AG04450 (cell line): ENCODE measurements at regions of chr6 and their contacts with region 1.

Region 1: DNA sequence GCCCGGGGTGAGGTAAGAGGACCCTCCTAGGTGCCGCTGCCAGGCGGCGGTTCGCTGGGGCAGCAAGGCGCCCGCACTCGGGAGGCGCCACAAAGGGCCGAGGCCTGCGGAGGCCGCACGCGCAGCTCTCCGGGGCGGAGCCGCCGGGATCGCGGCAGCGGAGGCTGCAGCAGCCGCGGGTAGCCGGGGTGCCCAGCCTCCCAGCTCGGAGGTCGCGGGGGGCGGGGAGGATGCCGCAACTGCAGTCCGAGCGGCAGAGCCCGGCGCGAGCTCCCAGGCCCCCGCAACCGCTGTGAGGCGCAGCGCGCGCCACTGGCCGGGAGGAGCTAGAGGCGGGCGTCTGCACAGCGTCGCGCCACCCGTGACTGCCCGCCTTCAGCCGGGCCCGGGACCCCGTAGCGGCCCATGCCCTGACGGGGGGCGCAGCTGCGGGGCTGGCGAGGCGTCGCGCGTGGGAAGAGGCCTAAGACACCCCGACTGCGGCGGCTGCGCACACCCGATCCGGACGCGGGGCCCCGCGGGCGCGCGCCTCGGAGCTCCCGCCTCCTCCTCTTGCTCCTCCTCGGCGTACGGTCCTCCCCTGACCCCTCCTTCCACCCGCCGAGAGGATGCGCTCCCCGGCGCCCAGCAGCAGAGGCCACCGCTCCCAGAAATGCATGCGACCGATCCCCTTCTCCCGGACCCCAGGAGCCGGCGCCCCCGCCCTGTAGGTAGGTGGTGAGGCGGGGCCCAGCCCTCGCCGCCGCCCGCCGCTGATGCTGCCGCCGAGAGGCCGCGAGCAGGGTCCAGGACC is at the start of gene NCOA7:
- DNase-seq: no peak
- H3K4me3 ChIP-seq: peak within 1 kb of the TSS; percentile 76
- H3K27ac ChIP-seq: peak within 1 kb of the TSS; percentile 85
- H3K27me3 ChIP-seq: no peaks in the 10 kb centered on the region
- CTCF ChIP-seq: no peak
- polyA plus RNA-seq, gene NCOA7: 21.1 and 21.5 TPM in 2 replicates

Region 2: DNA sequence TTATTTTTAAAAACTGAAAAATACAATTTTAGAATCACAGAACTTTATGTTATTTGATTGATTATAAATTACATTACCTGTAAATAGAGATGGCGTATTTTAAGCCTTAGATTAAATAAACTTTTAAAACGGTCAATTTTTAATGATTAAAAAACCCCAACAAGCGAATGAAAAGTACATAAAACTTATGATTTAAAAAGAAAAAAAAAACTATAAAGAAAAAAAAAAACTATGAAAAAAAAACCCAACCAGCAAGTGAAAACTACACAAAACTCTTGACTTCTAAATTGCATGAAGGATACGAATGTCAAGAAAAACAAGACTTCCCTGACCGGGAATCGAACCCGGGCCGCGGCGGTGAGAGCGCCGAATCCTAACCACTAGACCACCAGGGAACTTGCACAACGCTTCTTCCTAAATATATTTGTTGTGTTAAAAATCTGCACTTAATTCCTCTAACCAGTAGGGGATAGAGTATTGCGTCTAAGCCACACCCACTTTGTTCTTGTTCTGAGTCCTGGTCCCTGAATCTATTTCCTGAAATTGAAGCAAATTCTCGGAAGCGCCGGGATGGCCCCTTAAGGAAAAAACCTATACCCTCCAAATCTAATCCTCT is 10.5 kb before region 1 on chr6:
- CTCF ChIA-PET with region 1: interaction called, 23 read pairs
- POLR2A ChIA-PET with region 1: interaction called, 15 read pairs
- DNase-seq: peak; percentile 79
- H3K4me3 ChIP-seq: peak overlapping the region; percentile 68
- H3K27ac ChIP-seq: peak overlapping the region; percentile 88
- H3K27me3 ChIP-seq: no peaks in the 10 kb centered on the region
- CTCF ChIP-seq: peak; percentile 28; the same call in 1 of the 2 replicates

Region 3: GRCh38 chr6:125821825-125822281 is 31.3 kb after region 1 on chr6:
- CTCF ChIA-PET with region 1: no interaction called
- POLR2A ChIA-PET with region 1: no interaction called
- DNase-seq: no peak
- H3K4me3 ChIP-seq: no peak overlapping the region
- H3K27ac ChIP-seq: no peak overlapping the region
- H3K27me3 ChIP-seq: no peaks in the 10 kb centered on the region
- CTCF ChIP-seq: no peak

Region 4: DNA sequence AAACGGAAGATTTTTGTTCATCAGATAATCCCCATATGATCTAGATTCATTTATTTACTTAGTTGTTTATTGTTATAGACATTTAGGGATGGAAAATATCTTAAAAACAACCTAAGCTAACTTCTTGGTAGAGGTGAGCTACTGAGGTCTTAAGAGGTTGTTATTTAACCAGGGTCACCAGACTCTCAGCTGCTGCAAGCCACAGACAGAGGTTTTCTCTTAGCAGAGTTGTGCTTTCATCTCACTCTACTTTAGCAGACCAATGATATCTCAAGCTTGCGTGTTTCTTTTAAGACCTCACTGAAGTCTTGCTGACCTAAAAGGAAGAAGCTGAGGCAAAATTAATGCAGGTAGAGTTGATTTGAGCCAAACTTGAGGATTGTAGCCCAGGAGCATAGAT is 43.8 kb after region 1 on chr6:
- CTCF ChIA-PET with region 1: interaction called, 11 read pairs
- POLR2A ChIA-PET with region 1: interaction called, 3 read pairs
- DNase-seq: no peak
- H3K4me3 ChIP-seq: no peak overlapping the region
- H3K27ac ChIP-seq: no peak overlapping the region
- H3K27me3 ChIP-seq: no peaks in the 10 kb centered on the region
- CTCF ChIP-seq: no peak

Region 5: GRCh38 chr6:125858427-125859320 is 68.1 kb after region 1 on chr6:
- CTCF ChIA-PET with region 1: interaction called, 10 read pairs
- POLR2A ChIA-PET with region 1: interaction called, 3 read pairs
- DNase-seq: peak; percentile 45
- H3K4me3 ChIP-seq: no peak overlapping the region
- H3K27ac ChIP-seq: no peak overlapping the region
- H3K27me3 ChIP-seq: no peaks in the 10 kb centered on the region
- CTCF ChIP-seq: peak; percentile 96

Region 6: DNA sequence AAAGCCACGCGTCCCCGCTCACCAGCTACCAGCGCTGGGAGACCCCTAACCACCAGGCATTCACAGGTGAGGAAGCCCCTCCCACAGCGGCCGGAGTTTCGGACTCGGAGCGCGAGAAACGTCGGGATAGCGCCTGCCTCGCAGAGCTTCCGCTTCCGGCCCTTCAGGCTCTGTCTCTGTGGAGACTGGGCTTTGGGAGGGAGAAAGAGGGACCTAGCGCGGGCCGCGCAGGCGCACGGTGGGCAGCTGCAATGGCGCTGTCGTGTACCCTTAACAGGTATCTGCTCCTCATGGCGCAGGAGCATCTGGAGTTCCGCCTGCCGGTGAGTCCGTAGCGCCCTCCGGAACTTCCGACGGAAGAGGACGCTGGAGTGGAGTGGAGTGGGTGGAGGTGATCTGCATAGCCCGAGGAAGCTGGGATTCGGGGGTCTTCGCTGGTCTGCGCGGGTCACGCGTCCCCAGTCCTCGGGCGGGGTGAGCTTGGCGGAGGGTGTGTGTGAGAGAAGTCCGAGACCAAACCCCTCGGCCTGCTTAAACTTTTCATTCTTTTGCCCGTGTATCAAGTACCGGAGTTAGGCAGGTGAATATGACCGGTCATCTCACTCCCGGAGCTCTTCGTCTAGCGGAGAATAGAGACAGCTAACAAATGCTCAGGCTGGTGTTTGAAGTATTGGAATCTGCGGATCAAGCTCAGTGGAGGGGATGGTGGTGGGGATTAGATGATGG is 195.9 kb after region 1 on chr6 and contains the start of gene TRMT11:
- CTCF ChIA-PET with region 1: interaction called, 18 read pairs
- POLR2A ChIA-PET with region 1: no interaction called
- DNase-seq: no peak
- H3K4me3 ChIP-seq: peak within 1 kb of the TSS; percentile 97
- H3K27ac ChIP-seq: peak within 1 kb of the TSS; percentile 55
- H3K27me3 ChIP-seq: no peaks in the 10 kb centered on the region
- CTCF ChIP-seq: 0 out of 2 replicates have a peak, but pooled peaks have one; percentile 9
- polyA plus RNA-seq, gene TRMT11: 18.5 and 27.3 TPM in 2 replicates